Heart right ventricle (tissue), 16 donors: ENCODE measurements at regions of chr15 and their contacts with region 1.

Region 1: GRCh38 chr15:59372352-59373211 is at the start of gene MYO1E:
- DNase-seq: peak; percentile 76 to 94
- ATAC-seq: peak; percentile 95 to 98 (median 98)
- H3K4me3 ChIP-seq: peak within 1 kb of the TSS; percentile 75 to 99 (median 90)
- H3K27ac ChIP-seq: peak within 1 kb of the TSS; percentile 83 to 97 (median 93)
- H3K4me1 ChIP-seq: peaks cover 0 to 35% (median 17%) of the 10 kb centered on the region in 9 donors
- H3K27me3 ChIP-seq: peaks cover 0 to 30% (median 0%) of the 10 kb centered on the region in 7 donors
- CTCF ChIP-seq: no peak
- total RNA-seq, gene MYO1E: 20.6 to 75.3 (median 28.4) TPM

Region 2: GRCh38 chr15:59221511-59222505 is 150.8 kb before region 1 on chr15:
- intact Hi-C with region 1: loop called in 1 of 10 experiments (anchors 5 kb)
- DNase-seq: no peak
- ATAC-seq: peak in 2 of 8 donors; percentile 42
- H3K4me3 ChIP-seq: no peak overlapping the region
- H3K27ac ChIP-seq: peak overlapping the region in 2 of 10 donors; percentile 8 to 10
- H3K4me1 ChIP-seq: peaks cover 3 to 48% (median 31%) of the 10 kb centered on the region in 9 donors
- H3K27me3 ChIP-seq: no peaks in the 10 kb centered on the region
- CTCF ChIP-seq: no peak

Region 3: GRCh38 chr15:59247364-59247763 is 125.2 kb before region 1 on chr15:
- intact Hi-C with region 1: loop called in 7 of 10 experiments (anchors 5 kb)
- DNase-seq: peak in 1 of 2 donors; percentile 62
- ATAC-seq: peak; percentile 72 to 94 (median 82)
- H3K4me3 ChIP-seq: no peak overlapping the region
- H3K27ac ChIP-seq: no peak overlapping the region
- H3K4me1 ChIP-seq: peaks cover 0 to 28% (median 9%) of the 10 kb centered on the region in 9 donors
- H3K27me3 ChIP-seq: no peaks in the 10 kb centered on the region
- CTCF ChIP-seq: peak; percentile 34 to 80 (median 62)

Region 4: GRCh38 chr15:59294568-59295260 is 77.9 kb before region 1 on chr15:
- intact Hi-C with region 1: loop called in 1 of 10 experiments (anchors 5 kb)
- DNase-seq: no peak
- ATAC-seq: no peak
- H3K4me3 ChIP-seq: no peak overlapping the region
- H3K27ac ChIP-seq: peak overlapping the region in 8 of 10 donors; percentile 5 to 67 (median 60)
- H3K4me1 ChIP-seq: peaks cover 7 to 89% (median 66%) of the 10 kb centered on the region in 9 donors
- H3K27me3 ChIP-seq: no peaks in the 10 kb centered on the region
- CTCF ChIP-seq: no peak

Region 5: GRCh38 chr15:59399465-59400102 is 27.0 kb after region 1 on chr15:
- intact Hi-C with region 1: no loop called
- DNase-seq: no peak
- ATAC-seq: peak in 3 of 8 donors; percentile 49 to 71 (median 59)
- H3K4me3 ChIP-seq: no peak overlapping the region
- H3K27ac ChIP-seq: no peak overlapping the region
- H3K4me1 ChIP-seq: peaks cover 0 to 40% (median 5%) of the 10 kb centered on the region in 9 donors
- H3K27me3 ChIP-seq: no peaks in the 10 kb centered on the region
- CTCF ChIP-seq: no peak

Region 6: DNA sequence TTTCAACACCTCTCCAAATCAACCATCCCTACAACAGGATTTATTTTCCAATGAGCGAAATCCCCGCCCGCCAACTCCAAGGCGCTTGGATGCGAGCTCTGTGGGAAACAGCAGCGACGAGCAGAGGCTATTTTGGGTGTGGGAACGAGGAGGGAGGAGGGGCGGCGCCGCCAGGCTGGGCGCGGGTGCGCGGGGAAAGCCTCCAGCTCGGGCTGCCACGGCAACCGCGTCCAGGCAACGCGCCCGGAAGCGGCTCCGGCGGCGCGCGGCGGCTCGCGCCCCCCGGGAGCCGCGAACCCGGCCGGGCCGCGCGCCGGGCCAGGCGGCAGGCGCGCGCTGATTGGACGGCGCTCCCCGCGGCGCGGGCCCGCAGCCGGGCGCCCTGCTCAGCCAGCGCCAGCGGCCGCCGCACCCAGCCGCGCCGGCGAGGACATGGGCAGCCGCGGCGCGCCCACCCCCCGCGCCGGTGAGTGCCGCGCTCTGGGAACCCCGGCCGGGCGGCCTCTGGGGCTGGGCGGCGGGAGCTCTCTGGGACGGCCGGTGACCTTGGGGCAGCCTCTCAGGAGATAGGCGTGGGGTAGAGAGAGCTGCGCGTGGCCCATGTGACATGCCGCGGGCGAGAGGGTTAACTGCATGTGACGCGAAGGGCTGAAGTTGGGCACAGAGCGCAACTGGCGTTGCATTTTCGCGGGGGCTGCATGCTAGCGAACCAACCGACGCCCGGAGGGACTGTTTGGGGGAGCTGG is 65.4 kb after region 1 on chr15 and contains the start of gene FAM81A:
- intact Hi-C with region 1: loop called in 4 of 10 experiments (anchors 5 kb)
- DNase-seq: peak; percentile 89 to 91
- ATAC-seq: peak; percentile 96 to 99 (median 98)
- H3K4me3 ChIP-seq: peak within 1 kb of the TSS; percentile 25 to 70 (median 60)
- H3K27ac ChIP-seq: peak within 1 kb of the TSS in 5 of 10 donors; percentile 28 to 62 (median 41)
- H3K4me1 ChIP-seq: peaks cover 7 to 21% (median 17%) of the 10 kb centered on the region in 9 donors
- H3K27me3 ChIP-seq: peaks cover 0 to 38% (median 0%) of the 10 kb centered on the region in 7 donors
- CTCF ChIP-seq: no peak
- total RNA-seq, gene FAM81A: 2.5 to 10.1 (median 4.2) TPM

Region 7: GRCh38 chr15:59484399-59484798 is 111.8 kb after region 1 on chr15:
- intact Hi-C with region 1: loop called in 3 of 10 experiments (anchors 10 kb)
- DNase-seq: peak in 1 of 2 donors; percentile 11
- ATAC-seq: peak; percentile 23 to 94 (median 76)
- H3K4me3 ChIP-seq: no peak overlapping the region
- H3K27ac ChIP-seq: no peak overlapping the region
- H3K4me1 ChIP-seq: peaks cover 0 to 10% (median 0%) of the 10 kb centered on the region in 9 donors
- H3K27me3 ChIP-seq: no peaks in the 10 kb centered on the region
- CTCF ChIP-seq: no peak